IMR-90 (cell line): ENCODE measurements at regions of chr7 and their contacts with region 1.

Region 1: GRCh38 chr7:11517853-11518252 is 314.1 kb downstream of the THSD7A start:
- DNase-seq: no peak
- ATAC-seq: no peak
- H3K4me3 ChIP-seq: no peak overlapping the region
- H3K27ac ChIP-seq: no peak overlapping the region
- H3K4me1 ChIP-seq: no peaks in the 10 kb centered on the region
- H3K27me3 ChIP-seq: no peaks in the 10 kb centered on the region
- CTCF ChIP-seq: no peak
- POLR2A ChIP-seq: no peak
- RAD21 ChIP-seq: no peak

Region 2: DNA sequence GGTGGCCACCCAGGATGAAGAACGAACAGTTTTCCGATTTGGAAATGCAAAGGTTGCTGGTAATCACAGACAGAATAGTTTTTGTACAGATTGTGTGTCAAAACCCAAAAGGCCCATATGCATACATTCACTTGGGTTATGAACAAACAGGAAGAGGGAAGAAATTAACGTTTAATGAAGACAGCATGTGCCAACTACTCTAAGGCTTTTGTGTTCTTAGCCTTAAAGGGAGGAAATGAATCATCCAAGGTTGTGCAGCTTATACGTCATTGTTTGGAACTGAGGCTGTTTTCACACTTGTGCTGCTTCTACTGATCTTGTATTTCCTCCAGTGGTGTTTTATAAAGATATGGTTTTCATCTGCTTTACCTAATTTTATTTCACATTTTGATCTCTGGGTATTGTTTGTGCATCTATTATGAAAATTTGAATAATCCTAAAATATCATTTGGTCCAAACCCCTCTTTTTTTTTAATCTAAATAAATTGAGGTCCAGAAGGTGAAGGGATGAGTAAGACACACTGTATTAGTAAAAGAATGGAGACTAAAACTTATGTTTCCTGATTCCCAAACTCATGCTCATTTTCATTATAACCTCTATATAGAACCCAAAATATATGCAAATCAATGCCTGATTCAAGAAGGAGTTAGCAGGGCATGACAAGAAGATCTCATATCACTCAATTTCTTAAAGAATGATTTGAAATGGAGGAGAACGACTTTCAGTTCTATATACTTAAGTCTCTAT is 58.9 kb before region 1 on chr7:
- CTCF ChIA-PET with region 1: no interaction called
- POLR2A ChIA-PET with region 1: no interaction called
- dilution Hi-C with region 1: no loop called
- in situ Hi-C with region 1: no loop called
- intact Hi-C with region 1: loop called (anchors 10 kb)
- DNase-seq: peak; percentile 78
- ATAC-seq: peak; percentile 69
- H3K4me3 ChIP-seq: no peak overlapping the region
- H3K27ac ChIP-seq: no peak overlapping the region
- H3K4me1 ChIP-seq: no peaks in the 10 kb centered on the region
- H3K27me3 ChIP-seq: no peaks in the 10 kb centered on the region
- CTCF ChIP-seq: no peak
- POLR2A ChIP-seq: no peak
- RAD21 ChIP-seq: no peak